Heart left ventricle (tissue), 16 donors: ENCODE measurements at regions of chr4 and their contacts with region 1.

Region 1: DNA sequence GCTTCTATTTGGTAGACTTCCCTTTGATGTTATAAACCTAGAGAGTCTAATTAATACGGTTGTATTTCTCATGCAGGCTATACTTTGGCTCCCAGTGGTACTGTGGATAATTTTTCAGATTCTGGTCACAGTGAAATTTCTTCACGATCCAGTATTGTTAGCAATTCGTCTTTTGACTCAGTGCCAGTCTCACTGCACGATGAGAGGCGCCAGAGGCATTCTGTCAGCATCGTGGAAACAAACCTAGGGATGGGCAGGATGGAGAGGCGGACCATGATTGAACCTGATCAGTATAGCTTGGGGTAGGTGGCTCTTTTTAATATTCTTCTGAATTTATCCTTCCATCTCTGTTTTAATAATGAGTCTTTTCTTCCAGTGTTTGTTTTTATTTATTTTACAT is 249.7 kb downstream of the RAPGEF2 start:
- DNase-seq: no peak
- ATAC-seq: peak in 3 of 4 donors; percentile 37 to 55 (median 53)
- H3K4me3 ChIP-seq: no peak overlapping the region
- H3K27ac ChIP-seq: peak overlapping the region in 4 of 12 donors; percentile 3 to 58 (median 36)
- H3K4me1 ChIP-seq: peaks cover 0 to 40% (median 6%) of the 10 kb centered on the region in 12 donors
- H3K27me3 ChIP-seq: no peaks in the 10 kb centered on the region
- CTCF ChIP-seq: no peak
- POLR2A ChIP-seq: no peak

Region 2: GRCh38 chr4:159428975-159429692 is 76.5 kb after region 1 on chr4:
- intact Hi-C with region 1: loop called in 1 of 10 experiments (anchors 5 kb)
- DNase-seq: no peak
- ATAC-seq: peak; percentile 76 to 81 (median 78)
- H3K4me3 ChIP-seq: peak overlapping the region in 6 of 12 donors; percentile 5 to 39 (median 14)
- H3K27ac ChIP-seq: peak overlapping the region in 7 of 12 donors; percentile 20 to 69 (median 49)
- H3K4me1 ChIP-seq: peaks cover 0 to 22% (median 11%) of the 10 kb centered on the region in 12 donors
- H3K27me3 ChIP-seq: no peaks in the 10 kb centered on the region
- CTCF ChIP-seq: no peak
- POLR2A ChIP-seq: no peak